OCI-LY7 (cell line): ENCODE measurements at regions of chr4 and their contacts with region 1.

Region 1: GRCh38 chr4:143549928-143550327 is 36.4 kb downstream of the SMARCA5 start:
- DNase-seq: no peak
- H3K4me3 ChIP-seq: no peak overlapping the region
- H3K27ac ChIP-seq: no peak overlapping the region
- H3K4me1 ChIP-seq: no peaks in the 10 kb centered on the region
- CTCF ChIP-seq: no peak

Region 2: GRCh38 chr4:142595222-142595871 is 954.6 kb before region 1 on chr4:
- CTCF ChIA-PET with region 1: no interaction called
- POLR2A ChIA-PET with region 1: no interaction called
- intact Hi-C with region 1: no loop called
- DNase-seq: no peak
- H3K4me3 ChIP-seq: no peak overlapping the region
- H3K27ac ChIP-seq: no peak overlapping the region
- H3K4me1 ChIP-seq: no peaks in the 10 kb centered on the region
- CTCF ChIP-seq: no peak

Region 3: DNA sequence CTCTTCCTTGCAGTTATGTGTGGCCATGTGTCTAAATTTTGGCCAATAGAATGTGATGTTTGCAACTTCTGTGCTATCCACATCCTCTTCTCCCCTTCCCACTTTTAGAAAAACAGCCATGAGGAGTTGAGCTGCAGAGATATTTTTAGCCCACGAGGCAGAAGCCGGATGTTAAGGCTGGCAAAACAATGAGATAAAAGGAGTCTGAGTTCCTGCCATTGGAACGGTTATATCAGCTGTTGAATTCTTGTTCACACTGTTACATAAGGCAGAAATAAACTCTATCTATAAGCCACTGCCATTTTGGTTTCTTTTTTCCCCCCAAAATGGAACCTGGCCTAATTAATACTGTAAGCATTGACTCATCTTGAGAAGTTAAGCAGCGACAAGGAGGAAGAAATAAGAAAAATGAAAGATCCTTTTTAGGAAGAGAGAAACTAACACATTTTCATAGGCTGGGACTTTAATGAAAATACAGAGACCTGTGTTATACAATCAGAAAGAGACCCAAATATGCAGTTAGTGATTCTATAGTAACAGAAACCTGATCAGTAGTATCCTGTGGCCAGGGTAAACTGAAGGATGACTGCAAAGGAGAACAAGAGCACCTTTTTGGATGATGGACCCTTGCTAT is 904.3 kb before region 1 on chr4:
- CTCF ChIA-PET with region 1: no interaction called
- POLR2A ChIA-PET with region 1: no interaction called
- intact Hi-C with region 1: no loop called
- DNase-seq: no peak
- H3K4me3 ChIP-seq: no peak overlapping the region
- H3K27ac ChIP-seq: no peak overlapping the region
- H3K4me1 ChIP-seq: no peaks in the 10 kb centered on the region
- CTCF ChIP-seq: no peak

Region 4: DNA sequence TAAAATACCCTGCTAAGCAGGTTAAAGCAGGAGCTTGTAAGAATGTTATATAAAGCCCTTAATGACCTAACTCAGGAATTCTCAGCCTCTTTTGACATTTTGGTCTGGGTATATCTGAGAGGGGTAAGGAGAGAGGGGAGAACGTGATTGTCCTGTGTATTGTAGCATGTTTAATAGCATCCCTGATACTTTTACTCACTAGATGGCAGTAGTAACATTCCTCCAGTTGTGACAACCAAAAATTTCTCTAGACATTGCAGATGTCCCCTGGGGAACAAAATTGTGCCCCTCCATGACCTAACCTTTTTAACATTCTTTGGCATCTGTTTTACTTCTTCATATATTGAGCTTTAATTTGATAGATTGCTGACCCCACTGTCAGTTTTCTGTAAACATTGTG is 18.5 kb before region 1 on chr4:
- CTCF ChIA-PET with region 1: no interaction called
- POLR2A ChIA-PET with region 1: interaction called, 6 read pairs
- intact Hi-C with region 1: loop called (anchors 2 kb)
- DNase-seq: peak; percentile 12
- H3K4me3 ChIP-seq: no peak overlapping the region
- H3K27ac ChIP-seq: no peak overlapping the region
- H3K4me1 ChIP-seq: no peaks in the 10 kb centered on the region
- CTCF ChIP-seq: peak; percentile 74

Region 5: DNA sequence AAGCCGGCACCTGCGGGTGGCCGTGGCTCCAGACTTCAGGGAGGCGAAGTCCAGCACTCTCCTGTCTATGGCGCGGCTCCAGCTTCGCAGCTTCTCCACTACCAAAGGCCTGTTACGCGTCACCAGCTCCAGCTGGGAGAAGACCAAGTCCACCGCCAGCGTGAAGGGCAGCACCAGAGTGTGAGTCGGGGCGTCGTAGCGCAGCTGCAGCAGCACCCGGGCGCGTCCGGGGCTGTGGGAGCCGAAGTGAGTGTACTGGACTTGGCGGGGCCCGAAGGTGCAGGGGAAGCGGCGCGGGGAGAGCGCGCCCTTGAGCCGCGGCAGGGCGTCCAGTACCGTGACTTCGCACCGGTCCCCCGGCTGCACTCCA is 150.1 kb after region 1 on chr4:
- CTCF ChIA-PET with region 1: no interaction called
- POLR2A ChIA-PET with region 1: no interaction called
- intact Hi-C with region 1: no loop called
- DNase-seq: no peak
- H3K4me3 ChIP-seq: no peak overlapping the region
- H3K27ac ChIP-seq: no peak overlapping the region
- H3K4me1 ChIP-seq: no peaks in the 10 kb centered on the region
- CTCF ChIP-seq: no peak

Region 6: GRCh38 chr4:143768007-143768591 is 218.2 kb after region 1 on chr4:
- CTCF ChIA-PET with region 1: no interaction called
- POLR2A ChIA-PET with region 1: no interaction called
- intact Hi-C with region 1: no loop called
- DNase-seq: no peak
- H3K4me3 ChIP-seq: no peak overlapping the region
- H3K27ac ChIP-seq: no peak overlapping the region
- H3K4me1 ChIP-seq: no peaks in the 10 kb centered on the region
- CTCF ChIP-seq: no peak